ENCODE measurements at regions of chr5 and their contacts with region 1.

Region 1: DNA sequence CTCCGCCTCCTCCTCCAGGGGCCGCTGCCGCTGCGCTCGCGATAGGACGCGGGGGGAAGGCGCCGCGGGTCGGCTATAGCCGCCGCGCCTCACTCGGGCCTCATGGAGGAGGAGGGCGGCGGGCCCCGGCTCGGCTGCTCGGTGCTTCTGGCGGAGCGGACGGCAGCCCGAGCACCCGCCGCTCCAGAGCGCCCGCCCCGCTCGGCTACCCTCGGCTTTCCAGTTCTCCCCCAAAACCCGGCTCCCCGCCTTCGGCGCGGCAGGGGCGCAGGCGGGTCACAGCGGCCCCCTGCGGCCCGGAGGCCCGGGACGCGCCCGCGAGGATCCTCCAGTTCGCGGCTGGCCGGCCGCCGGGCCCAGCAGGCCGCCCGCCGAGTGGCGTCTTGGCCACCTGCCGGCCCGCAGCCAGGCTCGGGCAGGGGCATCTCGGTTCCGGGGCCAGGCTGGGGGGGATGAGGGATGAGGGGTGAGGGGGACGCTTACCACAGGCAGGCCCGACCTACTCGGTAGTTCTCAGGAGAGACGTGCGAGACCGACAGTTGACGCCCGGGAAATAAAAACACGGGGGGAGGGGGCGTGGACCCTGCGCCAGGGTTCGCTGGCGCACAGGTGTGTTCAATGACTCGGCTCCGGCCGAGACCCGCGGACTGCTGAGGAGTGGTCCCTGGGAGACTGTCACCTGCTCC is at the start of gene PAIP1:
- DNase-seq: peak; percentile 92
- H3K4me3 ChIP-seq: peak within 1 kb of the TSS; percentile 83 to 96 (median 86)
- H3K27ac ChIP-seq: peak within 1 kb of the TSS; percentile 93 to 97 (median 96)
- H3K4me1 ChIP-seq: peaks cover 34 to 49% (median 48%) of the 10 kb centered on the region in 4 donors
- H3K27me3 ChIP-seq: no peaks in the 10 kb centered on the region
- CTCF ChIP-seq: peak; percentile 65 to 70 (median 66)
- EP300 ChIP-seq: no peak
- POLR2A ChIP-seq: no peak
- total RNA-seq, gene PAIP1: 81.4 to 135 (median 106) TPM

Region 2: DNA sequence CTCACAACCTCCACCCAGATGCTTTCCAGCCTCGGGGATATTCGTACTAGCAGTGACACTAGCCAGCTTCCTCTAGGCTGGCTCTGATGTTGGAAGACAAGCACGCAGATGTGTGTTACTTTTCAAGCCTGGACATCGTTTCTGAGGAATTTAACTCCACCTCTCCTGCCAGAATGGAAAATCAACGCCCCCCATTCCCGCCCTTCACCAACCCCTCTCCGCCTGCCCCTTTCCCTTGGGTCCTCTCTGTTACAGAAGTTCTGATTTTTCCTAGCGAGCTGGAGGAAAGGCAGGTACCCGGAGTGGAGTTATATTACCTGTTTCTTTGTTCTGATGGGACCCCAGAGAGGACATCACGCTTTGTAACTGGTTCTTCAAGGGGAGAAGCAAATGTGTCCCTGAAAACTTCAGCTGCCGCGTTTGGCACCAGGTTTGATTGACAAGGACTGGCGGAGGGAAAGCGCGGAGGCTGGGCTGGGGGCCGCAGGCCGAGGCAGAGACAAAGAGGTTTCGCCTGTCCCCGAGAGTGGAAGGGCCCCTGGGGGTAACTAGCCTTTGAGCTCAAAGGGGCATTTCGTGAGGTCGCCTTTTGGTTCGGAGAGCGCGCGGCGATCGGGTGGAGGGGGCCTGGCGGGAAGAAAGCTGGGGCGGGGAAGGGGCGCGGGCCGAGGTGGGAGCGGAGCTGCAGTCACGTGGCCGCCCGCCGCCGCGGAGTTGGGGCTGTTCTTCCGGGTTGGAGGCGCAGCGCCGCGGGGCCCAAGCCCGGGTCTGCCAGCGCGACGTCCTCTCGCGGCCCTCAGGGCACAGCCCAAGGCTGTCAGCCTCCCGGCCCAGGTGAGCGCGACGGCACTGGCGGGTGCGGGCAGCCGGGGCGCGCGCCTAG is 45.7 kb after region 1 on chr5 and contains the start of gene NNT:
- intact Hi-C with region 1: loop called (anchors 1 kb)
- DNase-seq: no peak
- H3K4me3 ChIP-seq: peak within 1 kb of the TSS; percentile 73 to 92 (median 80)
- H3K27ac ChIP-seq: peak within 1 kb of the TSS; percentile 87 to 92 (median 90)
- H3K4me1 ChIP-seq: peaks cover 20 to 36% (median 30%) of the 10 kb centered on the region in 4 donors
- H3K27me3 ChIP-seq: no peaks in the 10 kb centered on the region
- CTCF ChIP-seq: no peak
- EP300 ChIP-seq: no peak
- POLR2A ChIP-seq: no peak
- total RNA-seq, gene NNT: 49.0 to 90.1 (median 70.3) TPM

Region 3: GRCh38 chr5:43889233-43889632 is 332.2 kb after region 1 on chr5:
- intact Hi-C with region 1: no loop called
- DNase-seq: no peak
- H3K4me3 ChIP-seq: no peak overlapping the region
- H3K27ac ChIP-seq: no peak overlapping the region
- H3K4me1 ChIP-seq: peaks cover 0 to 5% (median under 1%) of the 10 kb centered on the region in 4 donors
- H3K27me3 ChIP-seq: no peaks in the 10 kb centered on the region
- CTCF ChIP-seq: no peak
- EP300 ChIP-seq: no peak
- POLR2A ChIP-seq: no peak

Measured in esophagus muscularis mucosa (tissue), 4 donors.